ENCODE measurements at regions of chr5 and their contacts with region 1.

Region 1: DNA sequence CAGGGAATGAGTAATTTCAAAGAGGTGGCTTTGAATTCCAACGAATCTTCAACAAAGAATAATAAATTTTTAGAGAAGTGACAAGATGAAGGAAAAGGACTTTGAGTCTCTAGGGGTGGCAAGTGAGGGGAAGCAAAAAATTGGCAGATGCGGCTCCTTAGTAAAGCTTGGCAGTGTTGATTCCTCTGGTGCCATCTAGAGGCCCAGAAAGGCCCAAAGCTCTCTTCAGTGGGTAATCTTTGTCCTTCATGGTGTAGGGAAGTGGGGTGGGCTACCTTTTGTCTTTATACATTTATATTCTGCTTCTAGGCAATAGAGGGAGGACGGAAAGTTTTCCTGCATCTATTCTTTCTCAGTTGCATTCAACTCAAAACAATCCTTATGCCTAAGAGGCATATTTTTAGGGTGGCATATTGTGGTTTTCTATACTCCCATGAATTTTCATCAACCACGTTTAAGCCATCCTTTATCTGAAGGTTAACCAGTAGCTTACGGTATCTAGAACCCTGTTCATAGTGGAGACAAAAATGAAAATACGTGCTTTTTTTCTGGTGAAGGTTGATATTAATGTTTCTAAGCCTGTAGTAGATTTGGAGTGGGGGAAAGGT is 17.5 kb upstream of the ROPN1L start:
- DNase-seq: no peak
- H3K4me3 ChIP-seq: no peak overlapping the region
- H3K27ac ChIP-seq: no peak overlapping the region
- H3K4me1 ChIP-seq: no peaks in the 10 kb centered on the region
- H3K27me3 ChIP-seq: no peaks in the 10 kb centered on the region
- CTCF ChIP-seq: peak in 2 of 3 experiments; percentile 31 to 50

Region 2: GRCh38 chr5:9632495-9632894 is 791.7 kb before region 1 on chr5:
- intact Hi-C with region 1: no loop called
- DNase-seq: no peak
- H3K4me3 ChIP-seq: no peak overlapping the region
- H3K27ac ChIP-seq: no peak overlapping the region
- H3K4me1 ChIP-seq: no peaks in the 10 kb centered on the region
- H3K27me3 ChIP-seq: no peaks in the 10 kb centered on the region
- CTCF ChIP-seq: no peak

Region 3: DNA sequence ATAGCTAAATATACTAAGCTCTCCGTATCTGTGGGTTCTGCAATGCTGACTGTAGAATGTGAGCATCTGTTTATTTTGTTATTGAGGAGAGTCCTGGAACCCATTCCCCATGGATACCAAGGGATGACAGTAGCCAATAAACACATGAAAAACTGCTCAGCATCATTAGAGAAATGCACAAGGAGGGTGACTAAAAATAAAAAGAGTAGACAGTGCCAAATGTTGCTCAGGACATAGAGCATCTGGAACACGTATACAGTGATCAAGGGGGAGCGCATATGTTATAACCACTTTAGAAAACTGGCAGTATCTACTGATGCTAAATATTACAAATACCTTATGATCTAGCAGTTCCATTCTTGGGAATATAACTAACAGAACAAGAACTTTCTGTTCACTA is 39.7 kb before region 1 on chr5:
- intact Hi-C with region 1: loop called (anchors 1 kb)
- DNase-seq: no peak
- H3K4me3 ChIP-seq: no peak overlapping the region
- H3K27ac ChIP-seq: no peak overlapping the region
- H3K4me1 ChIP-seq: no peaks in the 10 kb centered on the region
- H3K27me3 ChIP-seq: no peaks in the 10 kb centered on the region
- CTCF ChIP-seq: no peak

Measured in ascending aorta (tissue), 2 donors.